Caco-2 (cell line): ENCODE measurements at regions of chr17 and their contacts with region 1.

Region 1: DNA sequence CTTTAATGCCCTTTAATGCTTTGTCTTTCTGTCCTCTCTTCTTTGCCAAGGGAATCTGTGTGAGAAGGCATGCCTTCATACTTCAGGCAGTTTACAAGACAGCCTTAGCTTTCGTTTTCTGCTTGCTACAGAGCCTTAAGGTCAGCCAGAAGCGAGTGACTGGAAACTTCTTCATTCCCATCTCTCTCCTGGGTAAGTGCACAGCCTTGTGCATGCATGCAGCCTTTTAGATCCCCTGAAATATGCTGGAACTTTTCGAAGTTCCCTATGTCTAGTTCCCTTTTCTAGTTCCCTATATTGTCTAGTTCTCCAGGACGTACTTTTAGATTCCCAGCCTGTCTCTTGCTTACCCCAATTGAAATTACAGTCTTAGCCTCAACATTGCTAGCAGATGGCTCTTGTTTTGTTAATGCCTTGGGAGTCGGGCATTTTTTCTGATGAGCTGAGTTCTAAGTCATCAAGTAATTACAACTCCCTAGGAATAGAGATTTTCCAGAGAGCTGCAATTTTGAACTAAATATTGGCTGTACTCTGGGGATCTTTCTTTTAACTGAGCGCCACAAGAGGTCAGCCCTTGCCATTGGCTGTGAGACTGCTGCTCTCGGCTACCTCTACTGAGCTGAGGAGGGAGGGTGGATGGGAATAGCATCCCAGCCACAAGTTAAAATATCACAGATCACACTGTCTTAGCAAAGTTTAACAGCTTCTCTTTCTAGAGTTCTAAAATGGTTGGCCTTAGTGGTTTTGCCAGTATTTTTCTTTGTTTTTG is 22.7 kb upstream of the PPM1D start:
- DNase-seq: peak in 1 of 2 experiments; percentile 45
- H3K4me3 ChIP-seq: 0 out of 2 replicates have a peak overlapping the region, but pooled peaks have one; percentile 9
- H3K4me3 Mint-ChIP-seq: peak overlapping the region; percentile 58
- H3K27ac Mint-ChIP-seq: peak overlapping the region; percentile 16
- H3K4me1 ChIP-seq: peaks cover 18% of the 10 kb centered on the region
- H3K4me1 Mint-ChIP-seq: no peaks in the 10 kb centered on the region
- H3K27me3 ChIP-seq: no peaks in the 10 kb centered on the region
- H3K27me3 Mint-ChIP-seq: no peaks in the 10 kb centered on the region
- CTCF ChIP-seq: no peak

Region 2: DNA sequence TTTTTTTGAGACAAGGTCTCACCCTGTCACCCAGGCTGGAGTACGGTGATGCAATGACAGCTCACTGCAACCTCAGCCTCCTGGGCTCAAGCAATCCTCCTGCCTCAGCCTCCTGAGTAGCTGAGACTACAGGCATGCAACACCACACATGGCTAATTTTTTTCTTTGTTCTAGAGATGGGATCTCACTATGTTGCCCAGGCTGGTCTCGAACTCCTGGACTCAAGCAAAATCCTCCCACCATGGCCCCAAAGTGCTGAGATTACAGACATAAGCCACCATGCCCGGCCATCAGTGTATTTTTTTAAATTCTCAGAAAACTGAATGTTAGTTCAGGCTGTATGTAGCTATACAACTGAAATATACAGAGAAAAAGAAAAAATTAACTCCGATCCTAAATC is 57.5 kb before region 1 on chr17:
- CTCF ChIA-PET with region 1: no interaction called
- POLR2A ChIA-PET with region 1: no interaction called
- intact Hi-C with region 1: no loop called
- DNase-seq: no peak
- H3K4me3 ChIP-seq: no peak overlapping the region
- H3K4me3 Mint-ChIP-seq: no peak overlapping the region
- H3K27ac Mint-ChIP-seq: no peak overlapping the region
- H3K4me1 ChIP-seq: peaks cover 7% of the 10 kb centered on the region; the same call in 1 of the 2 replicates
- H3K4me1 Mint-ChIP-seq: no peaks in the 10 kb centered on the region
- H3K27me3 ChIP-seq: no peaks in the 10 kb centered on the region
- H3K27me3 Mint-ChIP-seq: no peaks in the 10 kb centered on the region
- CTCF ChIP-seq: no peak

Region 3: DNA sequence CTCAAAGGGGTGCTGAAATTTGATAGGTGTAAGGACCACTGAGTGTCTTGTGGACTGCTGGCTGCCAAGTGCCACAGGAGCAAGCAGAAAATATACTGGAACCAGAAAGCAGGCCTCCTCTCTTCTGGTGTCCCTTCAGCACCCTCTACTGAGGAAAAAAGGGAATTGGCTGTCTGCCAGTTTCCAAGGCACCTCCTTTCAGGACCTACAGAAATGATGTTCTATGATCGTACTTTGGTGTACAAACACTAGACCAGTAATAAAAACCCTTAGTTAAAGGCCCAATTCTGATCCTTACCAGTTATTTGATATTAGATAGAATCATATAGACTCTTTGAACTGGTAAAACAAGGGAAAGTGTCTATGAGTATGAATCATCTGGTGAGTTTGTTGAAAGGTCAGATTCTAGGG is 64.5 kb after region 1 on chr17:
- CTCF ChIA-PET with region 1: interaction called, 12 read pairs
- POLR2A ChIA-PET with region 1: no interaction called
- intact Hi-C with region 1: loop called (anchors 1 kb)
- DNase-seq: peak; percentile 76 to 79
- H3K4me3 ChIP-seq: no peak overlapping the region
- H3K4me3 Mint-ChIP-seq: no peak overlapping the region
- H3K27ac Mint-ChIP-seq: no peak overlapping the region
- H3K4me1 ChIP-seq: peaks cover 5% of the 10 kb centered on the region; the same call in 1 of the 2 replicates
- H3K4me1 Mint-ChIP-seq: no peaks in the 10 kb centered on the region
- H3K27me3 ChIP-seq: no peaks in the 10 kb centered on the region
- H3K27me3 Mint-ChIP-seq: no peaks in the 10 kb centered on the region
- CTCF ChIP-seq: peak; percentile 85

Region 4: GRCh38 chr17:62014526-62014925 is 1437.2 kb after region 1 on chr17:
- CTCF ChIA-PET with region 1: no interaction called
- POLR2A ChIA-PET with region 1: no interaction called
- intact Hi-C with region 1: no loop called
- DNase-seq: no peak
- H3K4me3 ChIP-seq: no peak overlapping the region
- H3K4me3 Mint-ChIP-seq: no peak overlapping the region
- H3K27ac Mint-ChIP-seq: no peak overlapping the region
- H3K4me1 ChIP-seq: no peaks in the 10 kb centered on the region
- H3K4me1 Mint-ChIP-seq: no peaks in the 10 kb centered on the region
- H3K27me3 ChIP-seq: no peaks in the 10 kb centered on the region
- H3K27me3 Mint-ChIP-seq: no peaks in the 10 kb centered on the region
- CTCF ChIP-seq: no peak